ENCODE measurements at regions of chr2 and their contacts with region 1.

Region 1: DNA sequence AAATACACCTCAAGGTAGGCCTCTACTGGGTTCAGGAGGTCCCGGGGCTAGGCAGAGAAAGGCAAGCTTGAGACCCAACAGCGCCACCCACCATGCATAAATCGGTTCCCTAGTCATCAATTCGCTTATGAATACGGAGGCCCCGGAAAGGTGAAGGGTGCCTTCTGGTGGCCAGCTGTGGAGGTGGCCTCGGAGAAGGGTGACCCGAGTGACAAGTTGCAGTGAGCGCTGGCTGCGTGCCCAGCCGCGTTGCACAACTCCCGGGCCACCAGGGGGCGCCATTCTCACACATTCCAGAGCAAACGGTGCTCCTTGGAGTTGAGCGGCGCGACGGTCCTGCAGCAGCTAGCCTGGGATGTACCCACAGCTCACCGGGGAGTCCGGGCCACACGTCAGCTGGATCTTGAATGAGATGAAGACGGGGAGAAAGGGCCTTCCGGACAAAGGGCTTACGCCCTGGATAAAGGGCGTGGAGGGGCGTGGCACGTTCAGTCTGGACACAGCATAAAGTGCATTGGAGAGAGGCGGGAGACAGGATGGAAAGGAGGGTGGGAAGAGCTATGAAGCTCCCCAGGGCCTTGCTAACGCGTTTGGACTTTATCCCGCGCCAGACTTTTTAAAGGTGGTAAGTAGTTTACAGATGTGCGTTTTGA is 20.4 kb downstream of the TMSB10 start:
- DNase-seq: peak; percentile 84
- CTCF ChIP-seq: peak; percentile 99

Region 2: GRCh38 chr2:84498150-84498799 is 427.6 kb before region 1 on chr2:
- CTCF ChIA-PET with region 1: interaction called, 20 read pairs
- POLR2A ChIA-PET with region 1: no interaction called
- DNase-seq: no peak
- CTCF ChIP-seq: no peak

Region 3: DNA sequence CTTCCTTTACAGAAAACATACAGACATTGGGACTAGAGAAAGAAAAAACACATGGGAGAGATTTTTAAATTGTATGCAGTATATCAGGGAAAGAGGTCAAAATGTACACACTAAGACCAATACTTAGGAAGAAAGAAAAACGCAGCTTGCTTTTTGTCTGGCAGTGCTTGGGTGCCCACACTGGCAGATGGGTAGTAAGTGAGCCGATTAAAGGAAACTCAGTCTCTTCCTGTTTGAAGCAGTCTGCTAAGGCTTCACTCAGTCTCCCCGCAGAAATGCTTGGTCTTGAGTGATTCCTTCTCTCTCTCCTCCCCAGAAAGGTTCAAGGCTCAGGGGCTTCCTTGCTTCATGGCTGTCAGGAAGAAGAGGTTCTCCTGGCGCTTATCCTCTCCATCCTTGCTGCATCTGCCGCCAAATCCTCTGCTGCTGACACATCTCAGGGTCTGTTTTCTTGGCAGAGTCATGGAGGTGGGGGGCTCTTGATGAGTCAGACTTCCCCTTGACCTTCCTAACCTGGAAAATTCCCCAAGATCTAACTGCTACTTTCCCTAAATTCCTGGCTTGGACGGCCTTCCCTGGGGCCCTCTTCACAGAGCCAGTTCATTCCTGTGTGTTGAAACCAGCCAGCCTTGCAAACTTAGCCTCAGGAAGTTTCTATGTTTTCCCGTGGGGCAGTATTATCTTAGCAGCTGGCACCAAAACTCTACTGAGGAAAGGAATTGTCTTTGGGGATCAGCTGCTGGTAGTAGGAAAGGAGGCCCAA is 30.9 kb before region 1 on chr2:
- CTCF ChIA-PET with region 1: interaction called, 112 read pairs
- POLR2A ChIA-PET with region 1: no interaction called
- DNase-seq: no peak
- CTCF ChIP-seq: no peak

Region 4: DNA sequence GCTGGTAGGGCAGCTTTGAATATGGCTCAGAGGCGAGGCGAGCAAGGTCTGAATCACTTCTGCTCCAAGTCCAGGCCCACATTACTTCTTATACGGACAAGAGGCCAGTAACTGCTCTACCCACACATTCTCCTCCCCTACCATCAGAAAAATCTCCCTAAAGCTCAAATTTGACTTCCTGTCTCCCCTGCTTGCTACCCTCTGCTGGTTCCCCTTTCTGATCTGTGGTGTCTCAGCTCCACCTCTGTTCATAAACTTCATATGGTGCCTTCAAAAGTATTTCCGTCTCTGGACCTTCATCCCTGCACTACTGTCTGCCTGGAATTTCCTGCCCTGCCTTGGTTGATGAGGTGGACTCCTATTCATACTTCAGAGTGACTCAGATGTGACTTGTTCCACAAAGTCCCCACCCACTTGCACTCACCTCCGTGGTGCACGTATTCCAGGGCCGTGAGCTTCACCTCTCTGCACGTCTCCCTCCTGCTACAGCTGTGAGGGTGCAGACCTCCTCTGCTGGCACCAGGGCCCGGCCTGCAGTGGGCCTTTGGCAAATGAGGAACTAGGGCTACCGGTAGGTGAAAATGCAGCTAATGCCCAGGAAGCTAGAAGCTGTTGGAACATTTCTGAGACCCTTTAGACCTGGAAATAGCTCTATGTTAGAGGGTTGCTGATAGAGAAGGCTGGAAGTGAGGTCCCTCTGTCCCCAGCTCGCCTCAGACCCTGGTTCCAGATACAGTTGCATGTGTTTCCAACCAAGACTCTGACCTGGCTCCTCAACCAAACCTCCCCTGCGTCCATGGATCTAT is 20.6 kb after region 1 on chr2:
- CTCF ChIA-PET with region 1: interaction called, 312 read pairs
- POLR2A ChIA-PET with region 1: interaction called, 7 read pairs
- DNase-seq: peak; percentile 78
- CTCF ChIP-seq: peak; percentile 19

Region 5: DNA sequence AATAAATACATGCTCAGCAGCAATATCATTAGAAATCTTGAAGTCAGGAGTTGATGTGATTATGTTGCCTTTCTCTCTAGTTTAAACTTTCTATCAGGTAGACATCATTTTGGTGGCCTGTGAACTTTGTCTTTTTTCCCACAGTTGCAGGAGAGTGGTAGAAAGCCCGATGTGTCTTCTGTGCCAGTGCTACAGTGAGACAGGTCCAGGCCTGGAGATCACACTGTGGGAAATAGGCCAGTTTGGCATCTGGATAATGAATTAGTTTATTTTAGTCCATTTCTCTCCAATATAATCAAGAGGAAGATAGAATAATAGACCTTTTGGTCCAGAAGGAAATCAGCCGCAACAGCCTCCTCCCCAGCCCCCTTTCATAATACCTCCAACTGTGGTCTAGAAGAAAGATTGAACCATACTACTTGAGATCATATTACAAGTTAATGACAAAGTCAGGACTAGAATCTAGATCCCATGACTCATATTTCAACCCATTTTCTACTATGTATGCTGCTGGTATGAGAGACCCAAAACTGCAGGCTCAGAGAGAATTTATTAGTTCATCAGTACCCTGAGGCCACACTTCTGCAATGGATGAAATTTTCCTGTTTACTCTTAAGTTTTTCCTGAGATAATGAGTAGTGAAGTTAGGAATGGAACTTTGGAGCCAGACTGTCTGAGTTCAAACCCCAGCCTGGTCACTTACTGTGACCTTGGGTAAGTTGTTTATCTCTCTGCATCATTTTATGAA is 65.7 kb after region 1 on chr2:
- CTCF ChIA-PET with region 1: interaction called, 10 read pairs
- POLR2A ChIA-PET with region 1: interaction called, 6 read pairs
- DNase-seq: no peak
- CTCF ChIP-seq: no peak

Region 6: DNA sequence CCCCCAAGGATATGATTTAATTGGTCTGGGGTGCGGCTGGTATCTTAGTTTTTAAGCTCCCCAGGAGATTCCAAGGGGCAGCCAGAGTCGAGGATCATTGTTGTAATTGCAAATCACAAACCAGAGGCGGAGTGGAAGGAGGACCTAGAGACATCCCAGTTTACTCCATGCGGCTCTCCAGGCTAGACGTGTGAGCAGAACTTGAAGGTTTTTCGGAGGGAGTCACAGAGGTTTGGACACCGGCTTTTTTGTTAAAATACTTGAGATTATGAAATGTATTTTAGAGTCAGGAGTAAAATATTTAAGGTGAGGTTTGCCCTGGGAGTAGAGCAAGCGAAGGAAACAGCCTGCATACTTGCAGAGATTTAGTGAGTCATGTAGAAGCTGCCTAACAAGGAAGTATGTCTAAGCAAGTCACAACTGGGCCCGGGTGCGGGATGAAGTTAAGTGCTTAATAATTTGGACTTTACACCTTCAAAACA is 362.4 kb after region 1 on chr2:
- CTCF ChIA-PET with region 1: interaction called, 21 read pairs
- POLR2A ChIA-PET with region 1: no interaction called
- DNase-seq: no peak
- CTCF ChIP-seq: no peak

Measured in GM10248 (cell line).